ENCODE measurements at regions of chrX and their contacts with region 1.

Region 1: GRCh38 chrX:112803105-112803504 is 37.5 kb downstream of the AMOT start:
- DNase-seq: no peak
- H3K4me3 ChIP-seq: no peak overlapping the region
- H3K27ac ChIP-seq: no peak overlapping the region
- H3K4me1 ChIP-seq: 0 out of 2 replicates have a peak, but pooled peaks cover 4% of the 10 kb centered on the region
- H3K27me3 ChIP-seq: no peaks in the 10 kb centered on the region
- CTCF ChIP-seq: no peak

Region 2: GRCh38 chrX:112731793-112732575 is 71.1 kb before region 1 on chrX:
- CTCF ChIA-PET with region 1: no interaction called
- POLR2A ChIA-PET with region 1: interaction called, 13 read pairs
- intact Hi-C with region 1: no loop called
- DNase-seq: no peak
- H3K4me3 ChIP-seq: no peak overlapping the region
- H3K27ac ChIP-seq: no peak overlapping the region
- H3K4me1 ChIP-seq: no peaks in the 10 kb centered on the region
- H3K27me3 ChIP-seq: no peaks in the 10 kb centered on the region
- CTCF ChIP-seq: peak; percentile 59

Region 3: GRCh38 chrX:113408843-113409242 is 605.7 kb after region 1 on chrX:
- CTCF ChIA-PET with region 1: no interaction called
- POLR2A ChIA-PET with region 1: no interaction called
- intact Hi-C with region 1: no loop called
- DNase-seq: no peak
- H3K4me3 ChIP-seq: no peak overlapping the region
- H3K27ac ChIP-seq: no peak overlapping the region
- H3K4me1 ChIP-seq: no peaks in the 10 kb centered on the region
- H3K27me3 ChIP-seq: no peaks in the 10 kb centered on the region
- CTCF ChIP-seq: no peak

Region 4: GRCh38 chrX:114252186-114252585 is 1449.1 kb after region 1 on chrX:
- CTCF ChIA-PET with region 1: no interaction called
- POLR2A ChIA-PET with region 1: no interaction called
- intact Hi-C with region 1: no loop called
- DNase-seq: no peak
- H3K4me3 ChIP-seq: no peak overlapping the region
- H3K27ac ChIP-seq: no peak overlapping the region
- H3K4me1 ChIP-seq: no peaks in the 10 kb centered on the region
- H3K27me3 ChIP-seq: no peaks in the 10 kb centered on the region
- CTCF ChIP-seq: no peak

Measured in PC-9 (cell line).